Esophagus squamous epithelium (tissue), 5 donors: ENCODE measurements at regions of chr21 and their contacts with region 1.

Region 1: DNA sequence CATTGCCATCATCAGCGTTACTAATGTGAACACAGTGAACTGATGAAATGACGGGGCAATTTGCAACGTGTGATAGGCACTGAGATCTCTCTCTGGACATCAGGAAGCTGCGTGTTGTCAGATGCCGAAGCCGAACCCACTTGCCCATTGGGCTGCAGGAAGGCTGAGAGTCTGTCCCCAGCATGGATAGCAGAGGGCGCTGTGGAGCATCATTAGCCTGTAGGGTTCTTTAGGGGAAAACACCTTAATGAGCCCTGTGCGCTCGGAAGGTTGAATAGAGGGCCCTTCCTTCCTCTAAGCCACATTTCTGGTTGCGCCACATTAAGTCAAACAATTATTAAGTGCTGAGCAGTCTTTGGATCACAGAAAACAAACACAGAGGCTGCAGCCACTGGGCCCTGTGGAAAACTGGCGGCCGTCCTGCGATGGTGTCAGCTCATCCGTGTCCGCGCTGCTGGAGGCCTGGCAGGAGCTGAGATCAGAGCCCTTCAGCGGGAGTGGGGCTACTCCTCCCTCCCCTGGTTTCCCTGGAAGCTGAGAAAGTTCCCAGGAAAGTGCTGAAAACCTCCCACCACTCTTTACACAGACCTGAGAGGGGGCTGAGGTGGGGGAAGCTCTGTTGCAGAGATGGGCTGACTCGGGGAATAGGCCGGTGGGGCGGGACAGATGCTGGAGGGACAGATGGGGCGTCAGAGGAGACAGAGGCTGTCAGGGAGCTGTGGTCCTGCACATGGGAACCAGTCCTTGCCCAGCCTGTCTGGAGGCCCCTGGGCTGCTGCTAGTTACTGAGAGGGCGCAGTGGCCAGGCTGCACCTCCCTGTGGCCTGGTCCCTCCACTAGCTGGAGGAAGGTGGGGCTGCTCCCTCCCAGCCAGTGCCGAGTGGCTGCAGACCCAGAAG is 12.7 kb downstream of the TFF2 start:
- DNase-seq: peak; percentile 14
- H3K4me3 ChIP-seq: peak overlapping the region in 1 of 4 donors; percentile 19
- H3K27ac ChIP-seq: peak overlapping the region in 2 of 4 donors; percentile 10 to 69
- H3K4me1 ChIP-seq: peaks cover 6 to 30% (median 9%) of the 10 kb centered on the region in 3 donors
- H3K27me3 ChIP-seq: peaks cover 0 to 39% (median 0%) of the 10 kb centered on the region in 4 donors
- CTCF ChIP-seq: peak; percentile 55 to 85 (median 70)
- POLR2A ChIP-seq: no peak

Region 2: DNA sequence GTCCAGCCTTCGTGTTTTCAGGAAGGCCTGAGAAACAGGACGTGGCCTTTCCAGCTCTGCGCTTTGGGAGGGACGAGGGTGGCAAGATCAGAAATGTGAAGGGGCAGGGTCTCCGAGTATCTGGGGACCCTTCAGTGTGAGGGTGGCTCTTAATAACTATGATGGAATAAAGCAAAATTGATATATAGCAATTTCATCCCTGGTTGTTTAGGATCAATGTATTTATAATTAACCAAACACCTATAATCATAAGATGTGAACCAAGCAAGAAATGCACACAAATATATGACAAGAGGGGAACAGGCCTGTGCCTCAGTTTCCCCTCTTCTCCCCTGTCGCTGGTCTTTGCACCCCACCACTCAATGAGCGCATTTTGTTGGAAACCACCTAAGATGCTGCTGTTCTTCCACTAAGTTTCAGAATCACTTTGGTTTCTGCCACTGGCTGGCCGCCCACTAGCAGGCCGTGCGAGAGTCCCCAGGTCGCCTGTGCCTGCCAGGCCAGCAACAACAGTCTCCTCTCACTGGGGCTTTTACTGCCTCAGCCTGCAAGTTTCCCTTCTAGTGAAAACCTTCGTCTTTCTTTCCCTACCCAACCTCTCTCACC is 102.2 kb after region 1 on chr21:
- intact Hi-C with region 1: no loop called
- DNase-seq: no peak
- H3K4me3 ChIP-seq: no peak overlapping the region
- H3K27ac ChIP-seq: no peak overlapping the region
- H3K4me1 ChIP-seq: no peaks in the 10 kb centered on the region
- H3K27me3 ChIP-seq: peaks cover 0 to 39% (median 0%) of the 10 kb centered on the region in 4 donors
- CTCF ChIP-seq: no peak
- POLR2A ChIP-seq: no peak

Region 3: GRCh38 chr21:42537106-42537742 is 199.1 kb after region 1 on chr21:
- intact Hi-C with region 1: loop called (anchors 10 kb)
- DNase-seq: no peak
- H3K4me3 ChIP-seq: no peak overlapping the region
- H3K27ac ChIP-seq: no peak overlapping the region
- H3K4me1 ChIP-seq: peaks cover 0 to 19% (median 2%) of the 10 kb centered on the region in 3 donors
- H3K27me3 ChIP-seq: no peaks in the 10 kb centered on the region
- CTCF ChIP-seq: peak in 2 of 6 experiments; percentile 21 to 40
- POLR2A ChIP-seq: no peak